ENCODE measurements at regions of chr9 and their contacts with region 1.

Region 1: GRCh38 chr9:128438343-128439109 is 17.3 kb upstream of the ODF2 start:
- DNase-seq: no peak
- H3K4me3 ChIP-seq: no peak overlapping the region
- CTCF ChIP-seq: peak; percentile 96

Region 2: DNA sequence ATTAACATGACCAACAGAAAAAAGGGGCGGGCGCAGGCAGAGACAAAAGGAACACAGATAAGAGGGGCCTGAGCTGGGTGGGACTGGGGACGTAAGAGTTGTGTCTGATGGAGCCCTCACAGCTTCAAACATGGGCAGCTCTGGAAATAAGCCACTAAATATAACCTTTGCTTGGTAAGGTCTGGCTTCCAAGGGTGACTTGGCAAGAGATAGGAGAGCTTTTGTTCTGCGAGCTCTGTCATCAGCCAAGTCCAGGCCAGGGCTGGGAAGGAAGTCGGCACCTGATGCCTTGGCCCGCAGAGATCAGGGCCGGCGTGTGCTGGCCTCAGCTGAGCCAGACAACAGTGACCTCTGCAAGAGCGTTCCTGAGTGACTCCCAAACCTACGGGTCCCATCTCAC is 128.1 kb before region 1 on chr9:
- CTCF ChIA-PET with region 1: no interaction called
- POLR2A ChIA-PET with region 1: no interaction called
- DNase-seq: no peak
- H3K4me3 ChIP-seq: no peak overlapping the region
- CTCF ChIP-seq: no peak

Region 3: DNA sequence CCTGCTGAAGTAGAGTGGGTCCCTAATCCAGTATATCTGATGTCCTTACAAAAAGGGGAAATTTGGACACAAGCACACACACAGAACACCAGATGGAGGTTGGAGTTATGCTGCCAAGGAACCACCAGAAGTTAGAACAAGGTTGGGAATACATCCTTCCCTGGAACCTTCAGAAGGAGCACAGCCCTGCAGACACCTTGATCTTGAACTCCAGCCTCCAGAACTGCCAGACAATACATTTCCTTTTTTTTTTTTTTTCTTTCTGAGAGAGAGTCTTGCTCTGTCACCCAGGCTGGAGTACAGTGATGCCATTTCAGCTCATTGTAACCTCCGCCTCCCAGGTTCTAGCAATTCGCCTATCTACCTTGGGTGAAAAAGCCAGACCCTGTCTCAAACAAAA is 10.2 kb after region 1 on chr9:
- CTCF ChIA-PET with region 1: interaction called, 66 read pairs
- POLR2A ChIA-PET with region 1: no interaction called
- DNase-seq: no peak
- H3K4me3 ChIP-seq: no peak overlapping the region
- CTCF ChIP-seq: no peak

Region 4: DNA sequence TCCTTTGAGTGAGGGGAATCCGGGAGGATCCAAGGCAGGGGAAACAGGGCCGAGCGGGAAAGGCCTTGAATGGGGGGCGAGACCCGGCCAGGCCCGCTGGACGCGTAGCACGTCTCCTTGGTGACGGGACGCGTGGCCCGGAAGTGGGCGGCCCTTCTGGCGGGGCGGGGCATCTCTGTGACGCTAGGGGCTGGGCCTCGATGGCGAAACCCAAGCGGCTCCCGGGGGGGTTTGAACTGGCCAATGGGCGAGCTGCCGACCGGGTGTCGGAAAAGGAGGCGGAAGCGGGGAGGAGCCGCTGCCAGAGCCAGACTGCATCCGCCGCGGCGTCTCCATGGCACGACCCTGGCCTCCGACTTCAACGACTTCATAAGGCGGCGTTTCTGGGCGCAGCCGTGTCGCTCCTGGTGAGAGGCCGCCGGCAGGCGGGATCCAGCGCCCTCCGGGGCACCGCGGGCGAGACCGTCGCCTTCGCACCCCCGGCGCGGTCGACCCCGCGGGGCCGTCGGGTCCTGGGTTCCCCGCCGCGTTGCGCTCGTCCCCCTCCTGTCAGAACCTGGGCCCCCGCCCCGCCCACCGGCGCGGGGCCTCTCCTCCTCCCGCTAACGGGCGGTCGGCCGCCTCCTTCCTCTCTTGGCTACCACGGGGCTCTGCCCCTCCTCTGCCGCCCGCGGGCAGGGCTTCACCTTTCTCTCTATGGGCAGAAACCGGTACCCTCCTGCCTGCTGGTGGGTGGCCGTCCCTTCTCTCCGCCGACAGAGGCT is 17.5 kb after region 1 on chr9 and contains the start of gene ODF2:
- CTCF ChIA-PET with region 1: interaction called, 66 read pairs
- POLR2A ChIA-PET with region 1: interaction called, 4 read pairs
- DNase-seq: peak; percentile 49
- H3K4me3 ChIP-seq: peak within 1 kb of the TSS; percentile 80
- CTCF ChIP-seq: no peak